ENCODE measurements at regions of chr18 and their contacts with region 1.

Region 1: DNA sequence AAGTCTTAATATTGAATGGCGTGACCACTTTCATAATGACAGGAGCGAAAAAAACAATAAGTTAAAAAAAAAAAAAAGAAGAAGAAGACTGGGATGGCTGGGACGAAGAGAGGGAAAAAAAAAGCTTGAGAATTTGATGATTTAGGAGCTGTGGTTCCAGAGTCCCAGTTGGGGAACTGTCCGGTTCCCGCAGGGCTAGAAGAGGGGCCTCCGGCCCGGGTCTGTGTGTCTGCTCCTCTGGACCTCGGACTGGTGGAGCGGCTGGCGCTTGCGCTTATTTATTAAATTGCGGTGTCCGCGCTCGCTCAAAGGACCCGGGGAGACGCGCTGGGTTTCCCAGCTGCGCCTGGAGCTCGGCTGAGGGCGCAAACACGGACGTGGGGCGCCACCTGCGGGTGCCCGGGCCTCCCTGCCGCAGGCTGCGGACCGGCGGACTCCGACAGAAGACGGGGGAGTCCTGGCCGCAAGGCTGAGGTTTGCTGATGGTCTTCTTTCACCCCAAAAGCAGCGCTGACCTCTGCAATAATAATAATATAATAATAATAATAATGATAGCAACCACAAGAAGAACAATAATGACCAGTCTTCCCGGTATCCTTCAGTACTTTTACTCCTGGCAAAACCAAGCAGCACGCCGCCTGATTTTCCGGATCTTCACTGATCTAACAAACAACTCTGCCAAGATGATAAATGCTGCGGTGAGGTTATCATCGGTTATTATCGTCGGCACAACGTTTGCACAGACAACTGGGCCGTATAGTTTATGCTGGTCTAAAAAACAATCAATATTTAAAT is at the start of gene CBLN2:
- DNase-seq: peak; percentile 76
- CTCF ChIP-seq: peak; percentile 88

Region 2: DNA sequence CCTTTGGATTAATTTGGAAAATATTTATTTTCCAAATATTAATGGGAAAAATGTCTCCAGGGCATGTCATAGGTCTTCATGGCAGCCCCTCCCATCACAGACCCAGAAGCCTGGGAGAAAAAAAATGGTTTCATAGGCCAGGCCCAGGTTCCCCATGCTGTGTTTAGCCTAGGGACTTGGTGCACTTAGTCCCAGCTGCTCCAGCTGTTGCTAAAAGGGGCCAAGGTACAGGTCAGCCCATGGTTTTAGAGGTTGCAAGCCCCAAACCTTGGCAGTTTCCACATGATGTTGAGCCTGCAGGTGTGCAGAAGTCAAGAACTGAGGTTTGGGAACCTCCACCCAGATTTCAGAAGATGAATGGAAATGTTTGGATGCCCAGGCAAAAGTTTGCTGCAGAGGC is 1945.9 kb before region 1 on chr18:
- CTCF ChIA-PET with region 1: interaction called, 11 read pairs
- POLR2A ChIA-PET with region 1: no interaction called
- DNase-seq: no peak
- CTCF ChIP-seq: no peak

Region 3: GRCh38 chr18:72502671-72503431 is 41.4 kb before region 1 on chr18:
- CTCF ChIA-PET with region 1: no interaction called
- POLR2A ChIA-PET with region 1: no interaction called
- DNase-seq: no peak
- CTCF ChIP-seq: no peak

Measured in GM10248 (cell line).